ENCODE measurements at regions of chr3 and their contacts with region 1.

Region 1: DNA sequence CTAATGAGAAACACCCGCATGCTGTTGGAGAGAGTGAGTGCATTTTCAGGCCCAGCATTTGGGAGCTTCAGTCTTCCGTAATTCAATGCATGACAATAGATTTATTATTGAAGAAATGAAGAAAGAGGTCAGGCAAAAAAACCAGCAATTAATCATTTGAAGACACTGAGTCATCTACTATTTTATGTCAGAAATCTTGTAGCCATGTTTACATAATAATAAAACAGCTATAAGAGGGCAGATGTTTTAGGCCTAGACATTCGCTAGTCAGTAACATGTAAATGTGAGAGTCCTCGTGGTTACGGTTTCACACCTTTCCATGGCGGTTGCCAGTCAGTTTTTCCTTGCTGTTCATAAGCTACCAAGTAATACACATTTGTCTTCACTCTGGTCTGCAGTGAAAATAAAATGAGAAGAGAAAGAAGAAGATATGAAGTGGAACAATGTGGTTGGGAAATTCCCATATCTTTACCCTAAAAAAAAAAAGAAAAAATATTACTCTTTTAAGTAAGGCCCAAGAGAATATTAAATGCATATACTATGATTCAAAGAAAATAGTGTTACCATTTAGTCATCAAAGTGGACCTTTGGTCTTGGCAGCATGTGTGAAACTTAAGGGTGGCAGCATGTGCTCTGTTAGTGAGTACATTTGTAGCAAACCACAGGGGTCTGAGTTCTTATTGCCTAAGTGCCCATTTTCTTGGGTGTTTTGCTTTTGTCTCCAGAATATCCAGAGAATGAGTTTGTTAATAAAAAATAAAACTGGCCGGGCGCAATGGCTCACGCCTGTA is 140.5 kb upstream of the TBL1XR1 start:
- DNase-seq: peak; percentile 87
- H3K4me3 Mint-ChIP-seq: peak overlapping the region; percentile 29
- H3K27ac Mint-ChIP-seq: peak overlapping the region; percentile 84
- H3K4me1 Mint-ChIP-seq: peaks cover 41% of the 10 kb centered on the region
- H3K27me3 Mint-ChIP-seq: no peaks in the 10 kb centered on the region

Region 2: GRCh38 chr3:177057768-177058167 is 280.0 kb before region 1 on chr3:
- intact Hi-C with region 1: loop called (anchors 5 kb)
- DNase-seq: peak; percentile 76
- H3K4me3 Mint-ChIP-seq: no peak overlapping the region
- H3K27ac Mint-ChIP-seq: no peak overlapping the region
- H3K4me1 Mint-ChIP-seq: peaks cover 19% of the 10 kb centered on the region
- H3K27me3 Mint-ChIP-seq: no peaks in the 10 kb centered on the region

Region 3: DNA sequence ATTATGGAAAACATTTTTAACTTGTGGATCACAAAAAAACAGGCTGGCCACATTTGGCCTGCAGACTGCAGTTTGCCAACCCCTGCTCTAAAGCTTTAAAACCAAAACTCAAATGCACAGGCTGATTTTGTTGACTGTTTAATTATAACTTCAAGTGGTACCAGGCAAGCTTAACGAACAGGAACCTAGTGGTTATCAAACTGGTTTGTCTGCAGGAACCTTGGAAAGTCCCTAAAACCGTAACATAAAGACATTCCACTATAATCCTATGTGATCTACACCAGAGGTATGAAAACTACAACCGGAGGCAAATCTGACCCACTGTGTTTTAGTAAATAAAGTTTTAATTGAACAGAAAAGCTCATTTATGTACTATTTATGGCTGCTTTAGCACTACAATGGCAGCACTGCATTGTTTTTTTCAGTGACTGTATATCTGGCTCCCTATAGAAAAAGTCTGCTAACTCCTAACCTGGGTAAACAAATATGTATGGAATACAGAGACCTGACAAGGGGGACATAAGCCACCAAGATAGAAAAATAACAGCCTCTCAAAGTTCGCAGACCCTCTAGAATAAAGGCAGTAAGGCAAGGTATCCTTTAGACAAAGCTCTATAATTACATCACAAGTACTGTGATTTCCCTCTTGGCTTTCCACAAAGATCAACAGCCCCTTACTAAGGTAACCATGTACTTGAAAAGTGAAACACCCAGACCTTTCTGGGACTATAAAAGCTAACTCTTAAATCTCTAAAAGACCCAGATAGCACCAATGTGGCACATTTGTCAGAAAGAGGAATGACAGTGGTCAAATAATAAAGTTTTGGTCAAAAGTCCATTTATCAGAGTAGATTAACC is 192.6 kb before region 1 on chr3:
- intact Hi-C with region 1: loop called (anchors 5 kb)
- DNase-seq: peak; percentile 81
- H3K4me3 Mint-ChIP-seq: peak overlapping the region; percentile 72
- H3K27ac Mint-ChIP-seq: peak overlapping the region; percentile 82
- H3K4me1 Mint-ChIP-seq: peaks cover 54% of the 10 kb centered on the region
- H3K27me3 Mint-ChIP-seq: no peaks in the 10 kb centered on the region

Region 4: DNA sequence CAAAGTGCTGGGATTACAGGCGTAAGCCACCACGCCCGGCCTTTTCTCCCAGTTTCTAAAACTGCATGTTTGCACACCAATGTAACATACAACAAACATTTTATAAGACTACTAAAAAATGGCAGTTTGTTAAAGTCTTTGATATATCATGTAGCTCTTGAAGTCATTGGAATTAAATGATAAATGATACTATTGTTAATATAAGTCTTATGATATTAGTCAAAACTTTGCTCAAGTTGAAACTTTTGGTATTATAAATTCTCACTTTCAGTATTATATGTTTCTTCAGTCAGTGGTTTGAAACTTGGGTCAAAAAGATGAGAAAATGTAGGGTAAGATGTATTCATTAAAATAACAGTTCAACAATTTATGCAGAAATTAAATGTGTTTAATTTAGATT is 22.8 kb before region 1 on chr3:
- intact Hi-C with region 1: loop called (anchors 1 kb)
- DNase-seq: no peak
- H3K4me3 Mint-ChIP-seq: no peak overlapping the region
- H3K27ac Mint-ChIP-seq: peak overlapping the region; percentile 60
- H3K4me1 Mint-ChIP-seq: peaks cover 14% of the 10 kb centered on the region
- H3K27me3 Mint-ChIP-seq: no peaks in the 10 kb centered on the region

Region 5: GRCh38 chr3:177589911-177590381 is 252.2 kb after region 1 on chr3:
- intact Hi-C with region 1: loop called (anchors 1 kb)
- DNase-seq: no peak
- H3K4me3 Mint-ChIP-seq: no peak overlapping the region
- H3K27ac Mint-ChIP-seq: peak overlapping the region; percentile 12
- H3K4me1 Mint-ChIP-seq: peaks cover 28% of the 10 kb centered on the region
- H3K27me3 Mint-ChIP-seq: no peaks in the 10 kb centered on the region

Region 6: GRCh38 chr3:178001670-178002101 is 664.0 kb after region 1 on chr3:
- intact Hi-C with region 1: loop called (anchors 10 kb)
- DNase-seq: peak; percentile 77
- H3K4me3 Mint-ChIP-seq: peak overlapping the region; percentile 63
- H3K27ac Mint-ChIP-seq: peak overlapping the region; percentile 91
- H3K4me1 Mint-ChIP-seq: peaks cover 36% of the 10 kb centered on the region
- H3K27me3 Mint-ChIP-seq: no peaks in the 10 kb centered on the region

Measured in activated CD4-positive, alpha-beta T cell treated with anti-CD3 and anti-CD28 coated beads, Interleukin-2, amount 10 ng/mL, durations not matched to agents 24 days and 14 days (primary cell).